ENCODE measurements at regions of chr19 and their contacts with region 1.

Region 1: GRCh38 chr19:50695251-50696093 is 24.1 kb downstream of the SHANK1 start:
- DNase-seq: no peak
- H3K4me3 ChIP-seq: no peak overlapping the region
- H3K27ac ChIP-seq: no peak overlapping the region
- H3K4me1 ChIP-seq: no peaks in the 10 kb centered on the region
- H3K27me3 ChIP-seq: peaks cover 9% of the 10 kb centered on the region
- CTCF ChIP-seq: no peak

Region 2: GRCh38 chr19:50739914-50740426 is 44.5 kb after region 1 on chr19:
- CTCF ChIA-PET with region 1: no interaction called
- dilution Hi-C with region 1: loop called (anchors 5 kb)
- in situ Hi-C with region 1: no loop called
- intact Hi-C with region 1: no loop called
- DNase-seq: no peak
- H3K4me3 ChIP-seq: no peak overlapping the region
- H3K27ac ChIP-seq: no peak overlapping the region
- H3K4me1 ChIP-seq: no peaks in the 10 kb centered on the region
- H3K27me3 ChIP-seq: no peaks in the 10 kb centered on the region
- CTCF ChIP-seq: no peak